AG04450 (cell line): ENCODE measurements at regions of chr9 and their contacts with region 1.

Region 1: GRCh38 chr9:114681594-114682332 is at the start of gene TEX48:
- DNase-seq: no peak
- H3K4me3 ChIP-seq: no peak within 1 kb of the TSS
- H3K27ac ChIP-seq: no peak within 1 kb of the TSS
- H3K27me3 ChIP-seq: no peaks in the 10 kb centered on the region
- CTCF ChIP-seq: peak; percentile 79
- polyA plus RNA-seq, gene TEX48: not detected in 2 replicates

Region 2: GRCh38 chr9:114180696-114181606 is 500.8 kb before region 1 on chr9:
- CTCF ChIA-PET with region 1: no interaction called
- POLR2A ChIA-PET with region 1: no interaction called
- DNase-seq: no peak
- H3K4me3 ChIP-seq: peak overlapping the region; percentile 21
- H3K27ac ChIP-seq: peak overlapping the region; percentile 77
- H3K27me3 ChIP-seq: no peaks in the 10 kb centered on the region
- CTCF ChIP-seq: no peak

Region 3: GRCh38 chr9:114405294-114406034 is 276.3 kb before region 1 on chr9:
- CTCF ChIA-PET with region 1: interaction called, 16 read pairs
- POLR2A ChIA-PET with region 1: no interaction called
- DNase-seq: no peak
- H3K4me3 ChIP-seq: no peak overlapping the region
- H3K27ac ChIP-seq: no peak overlapping the region
- H3K27me3 ChIP-seq: no peaks in the 10 kb centered on the region
- CTCF ChIP-seq: peak; percentile 87

Region 4: DNA sequence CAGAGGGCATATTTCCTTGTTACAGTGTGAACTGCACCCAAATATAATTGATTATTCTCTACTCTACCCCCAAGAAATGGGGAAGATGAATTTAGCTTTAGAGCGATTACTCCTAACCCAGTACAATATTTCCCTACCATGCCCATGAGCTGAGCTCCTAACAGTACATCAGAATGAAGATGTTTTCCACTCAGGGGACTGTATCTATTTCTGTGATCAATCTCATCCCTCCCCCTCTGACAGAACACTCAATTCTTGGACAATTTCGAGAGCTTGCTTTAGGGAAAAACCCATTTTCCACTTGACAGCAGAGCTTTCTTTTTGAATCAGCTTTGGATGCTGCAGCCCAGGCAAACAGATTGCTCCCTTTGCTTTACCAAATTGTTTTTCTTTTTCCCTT is 24.9 kb after region 1 on chr9:
- CTCF ChIA-PET with region 1: interaction called, 11 read pairs
- POLR2A ChIA-PET with region 1: no interaction called
- DNase-seq: no peak
- H3K4me3 ChIP-seq: no peak overlapping the region
- H3K27ac ChIP-seq: no peak overlapping the region
- H3K27me3 ChIP-seq: peaks cover 15% of the 10 kb centered on the region
- CTCF ChIP-seq: no peak

Region 5: DNA sequence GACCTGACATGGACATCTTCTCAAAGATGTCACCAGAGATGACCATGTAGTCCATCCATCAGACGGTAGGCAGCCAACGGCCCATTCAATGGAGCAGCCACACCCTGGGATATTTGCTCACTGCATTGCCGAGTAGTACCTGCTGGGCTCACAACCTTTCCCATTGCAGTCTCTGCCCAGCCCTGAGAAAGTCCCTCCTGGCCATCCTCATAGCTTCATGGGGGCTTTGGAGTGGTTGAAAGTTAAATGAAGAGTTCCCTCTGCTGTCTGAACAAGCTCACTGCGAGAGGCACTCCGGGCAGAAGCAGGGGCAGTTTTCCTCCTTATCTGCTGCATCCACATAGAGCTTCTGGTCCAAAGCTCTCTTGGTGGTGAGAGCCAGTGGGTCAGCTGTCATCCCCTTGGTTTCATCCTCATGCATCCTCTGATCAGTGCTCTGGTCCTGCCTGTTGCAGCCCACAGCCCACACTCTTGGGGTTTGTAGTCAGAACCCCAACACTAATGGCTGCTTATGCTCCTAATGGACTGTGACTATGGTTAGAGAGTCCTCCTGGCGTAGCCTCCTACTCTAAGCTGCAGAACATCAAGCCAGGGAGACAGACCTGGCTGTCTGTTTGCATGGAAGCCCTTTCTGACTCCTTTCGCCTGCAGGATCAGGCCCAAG is 225.3 kb after region 1 on chr9:
- CTCF ChIA-PET with region 1: interaction called, 61 read pairs
- POLR2A ChIA-PET with region 1: no interaction called
- DNase-seq: no peak
- H3K4me3 ChIP-seq: no peak overlapping the region
- H3K27ac ChIP-seq: no peak overlapping the region
- H3K27me3 ChIP-seq: no peaks in the 10 kb centered on the region
- CTCF ChIP-seq: peak; percentile 83

Region 6: GRCh38 chr9:115013998-115014397 is 332.2 kb after region 1 on chr9:
- CTCF ChIA-PET with region 1: interaction called, 38 read pairs
- POLR2A ChIA-PET with region 1: no interaction called
- DNase-seq: peak; percentile 69
- H3K4me3 ChIP-seq: no peak overlapping the region
- H3K27ac ChIP-seq: no peak overlapping the region
- H3K27me3 ChIP-seq: no peaks in the 10 kb centered on the region
- CTCF ChIP-seq: peak; percentile 87